Heart left ventricle (tissue), 16 donors: ENCODE measurements at regions of chr18 and their contacts with region 1.

Region 1: DNA sequence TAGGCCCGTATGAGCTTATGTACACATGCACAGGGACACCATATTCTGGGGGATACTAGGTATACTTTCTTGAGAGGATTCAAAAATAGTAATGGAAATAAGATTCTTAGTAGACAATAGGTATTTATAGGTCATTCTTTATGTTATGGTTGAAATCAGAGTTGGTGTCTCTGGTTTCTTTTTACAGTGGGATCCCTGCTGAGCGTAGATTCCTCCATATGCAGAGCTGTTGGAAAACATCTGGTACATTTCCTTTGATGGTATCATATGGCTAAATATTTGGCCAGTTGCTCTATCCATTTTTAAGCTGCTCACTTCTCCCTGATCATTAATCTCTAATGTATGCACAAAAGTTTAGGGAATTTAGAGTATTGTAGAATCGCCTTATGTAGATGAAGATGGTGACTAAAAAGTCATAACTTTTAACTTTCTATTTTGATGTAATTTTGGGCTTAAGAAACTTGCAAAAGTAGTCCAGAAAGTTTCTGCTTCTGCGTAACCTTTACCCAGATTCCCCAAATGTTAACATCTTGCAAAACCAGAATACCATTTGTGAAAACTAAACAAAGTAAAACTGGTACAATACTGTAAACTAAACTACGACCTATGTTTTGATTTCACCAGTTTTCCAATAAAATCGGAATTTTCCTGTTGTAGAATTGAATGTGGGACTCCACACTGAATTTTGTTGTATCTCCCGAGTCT is 5.4 kb downstream of the ARHGAP28 start:
- DNase-seq: no peak
- ATAC-seq: no peak
- H3K4me3 ChIP-seq: no peak overlapping the region
- H3K27ac ChIP-seq: no peak overlapping the region
- H3K4me1 ChIP-seq: peaks cover 0 to 11% (median 4%) of the 10 kb centered on the region in 12 donors
- H3K27me3 ChIP-seq: no peaks in the 10 kb centered on the region
- CTCF ChIP-seq: no peak
- POLR2A ChIP-seq: no peak

Region 2: GRCh38 chr18:6776188-6776587 is 41.3 kb after region 1 on chr18:
- intact Hi-C with region 1: loop called in 2 of 10 experiments (anchors 5 kb)
- DNase-seq: no peak
- ATAC-seq: peak in 2 of 4 donors; percentile 59 to 67
- H3K4me3 ChIP-seq: peak overlapping the region in 1 of 12 donors; percentile 15
- H3K27ac ChIP-seq: peak overlapping the region in 4 of 12 donors; percentile 4 to 55 (median 46)
- H3K4me1 ChIP-seq: peaks cover 0 to 7% (median 4%) of the 10 kb centered on the region in 12 donors
- H3K27me3 ChIP-seq: no peaks in the 10 kb centered on the region
- CTCF ChIP-seq: no peak
- POLR2A ChIP-seq: no peak